ENCODE measurements at regions of chr14 and their contacts with region 1.

Region 1: DNA sequence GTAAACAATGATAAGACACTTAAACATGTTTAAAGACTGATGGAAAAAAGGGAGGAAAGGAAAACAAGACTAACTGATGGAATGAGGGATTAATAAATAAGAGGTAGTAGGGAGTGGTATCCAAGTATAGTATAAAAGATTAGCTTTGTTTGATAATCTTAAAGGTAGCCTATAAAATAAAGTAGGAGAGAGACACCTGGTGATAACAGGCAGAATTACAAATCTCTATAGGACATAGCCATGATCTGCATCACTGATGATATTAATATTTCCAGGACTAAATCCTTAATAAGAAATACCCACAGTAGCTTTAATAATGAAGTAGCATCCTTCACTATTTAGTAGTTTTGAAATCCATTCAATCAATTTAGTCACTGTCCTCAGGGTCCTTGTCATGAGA is 30.4 kb downstream of the DLGAP5 start:
- DNase-seq: no peak
- H3K4me3 ChIP-seq: no peak overlapping the region
- H3K27ac ChIP-seq: no peak overlapping the region
- H3K4me1 ChIP-seq: no peaks in the 10 kb centered on the region
- H3K27me3 ChIP-seq: no peaks in the 10 kb centered on the region
- CTCF ChIP-seq: peak; percentile 26 to 83 (median 62)
- POLR2A ChIP-seq: no peak

Region 2: GRCh38 chr14:54935958-54936357 is 225.0 kb before region 1 on chr14:
- intact Hi-C with region 1: no loop called
- DNase-seq: no peak
- H3K4me3 ChIP-seq: no peak overlapping the region
- H3K27ac ChIP-seq: no peak overlapping the region
- H3K4me1 ChIP-seq: no peaks in the 10 kb centered on the region
- H3K27me3 ChIP-seq: no peaks in the 10 kb centered on the region
- CTCF ChIP-seq: no peak
- POLR2A ChIP-seq: no peak

Region 3: DNA sequence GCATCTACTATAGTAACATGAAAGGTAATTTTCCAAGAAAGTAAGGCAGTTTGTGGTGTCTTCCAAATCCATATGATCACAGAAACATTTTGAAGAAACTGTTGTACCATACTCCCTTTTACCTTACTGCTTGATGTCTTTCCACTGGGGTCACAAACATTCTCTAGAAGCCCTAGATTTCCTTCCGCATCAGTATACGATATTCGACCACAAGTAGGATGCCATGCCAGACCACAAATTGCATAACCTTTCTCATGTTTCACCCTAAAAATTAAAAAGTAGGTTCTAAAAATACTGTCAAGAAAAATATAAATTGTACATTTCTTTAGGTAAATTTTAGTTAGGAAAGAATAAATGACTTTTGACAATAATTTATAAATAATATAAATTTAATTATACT is 160.6 kb before region 1 on chr14:
- intact Hi-C with region 1: no loop called
- DNase-seq: no peak
- H3K4me3 ChIP-seq: no peak overlapping the region
- H3K27ac ChIP-seq: no peak overlapping the region
- H3K4me1 ChIP-seq: no peaks in the 10 kb centered on the region
- H3K27me3 ChIP-seq: no peaks in the 10 kb centered on the region
- CTCF ChIP-seq: no peak
- POLR2A ChIP-seq: no peak

Region 4: GRCh38 chr14:55085060-55085660 is 75.8 kb before region 1 on chr14:
- intact Hi-C with region 1: loop called (anchors 5 kb)
- DNase-seq: no peak
- H3K4me3 ChIP-seq: no peak overlapping the region
- H3K27ac ChIP-seq: no peak overlapping the region
- H3K4me1 ChIP-seq: no peaks in the 10 kb centered on the region
- H3K27me3 ChIP-seq: no peaks in the 10 kb centered on the region
- CTCF ChIP-seq: no peak
- POLR2A ChIP-seq: no peak

Region 5: GRCh38 chr14:56044196-56044595 is 883.2 kb after region 1 on chr14:
- intact Hi-C with region 1: no loop called
- DNase-seq: no peak
- H3K4me3 ChIP-seq: no peak overlapping the region
- H3K27ac ChIP-seq: no peak overlapping the region
- H3K4me1 ChIP-seq: no peaks in the 10 kb centered on the region
- H3K27me3 ChIP-seq: no peaks in the 10 kb centered on the region
- CTCF ChIP-seq: no peak
- POLR2A ChIP-seq: no peak